Activated B cell treated with CpG ODN at 0.5 μM for 24 hours (primary cell): ENCODE measurements at regions of chr6 and their contacts with region 1.

Region 1: GRCh38 chr6:156825475-156825874 is 48.3 kb downstream of the ARID1B start:
- DNase-seq: no peak
- ATAC-seq: no peak
- H3K4me3 Mint-ChIP-seq: no peak overlapping the region
- H3K27ac Mint-ChIP-seq: peak overlapping the region; percentile 46
- H3K4me1 Mint-ChIP-seq: peaks cover 87% of the 10 kb centered on the region
- H3K27me3 Mint-ChIP-seq: no peaks in the 10 kb centered on the region
- CTCF ChIP-seq: no peak

Region 2: GRCh38 chr6:156589281-156589680 is 236.2 kb before region 1 on chr6:
- CTCF ChIA-PET with region 1: no interaction called
- POLR2A ChIA-PET with region 1: no interaction called
- intact Hi-C with region 1: no loop called
- DNase-seq: no peak
- ATAC-seq: no peak
- H3K4me3 Mint-ChIP-seq: no peak overlapping the region
- H3K27ac Mint-ChIP-seq: no peak overlapping the region
- H3K4me1 Mint-ChIP-seq: no peaks in the 10 kb centered on the region
- H3K27me3 Mint-ChIP-seq: peaks cover 6% of the 10 kb centered on the region
- CTCF ChIP-seq: no peak

Region 3: GRCh38 chr6:156809034-156809433 is 16.4 kb before region 1 on chr6:
- CTCF ChIA-PET with region 1: no interaction called
- POLR2A ChIA-PET with region 1: interaction called, 4 read pairs
- intact Hi-C with region 1: loop called (anchors 2 kb)
- DNase-seq: no peak
- ATAC-seq: peak; percentile 91
- H3K4me3 Mint-ChIP-seq: peak overlapping the region; percentile 44
- H3K27ac Mint-ChIP-seq: peak overlapping the region; percentile 47
- H3K4me1 Mint-ChIP-seq: peaks cover 88% of the 10 kb centered on the region
- H3K27me3 Mint-ChIP-seq: no peaks in the 10 kb centered on the region
- CTCF ChIP-seq: no peak

Region 4: GRCh38 chr6:156839591-156840001 is 14.1 kb after region 1 on chr6:
- CTCF ChIA-PET with region 1: no interaction called
- POLR2A ChIA-PET with region 1: no interaction called
- intact Hi-C with region 1: loop called (anchors 2 kb)
- DNase-seq: no peak
- ATAC-seq: no peak
- H3K4me3 Mint-ChIP-seq: no peak overlapping the region
- H3K27ac Mint-ChIP-seq: peak overlapping the region; percentile 50
- H3K4me1 Mint-ChIP-seq: peaks cover 58% of the 10 kb centered on the region
- H3K27me3 Mint-ChIP-seq: no peaks in the 10 kb centered on the region
- CTCF ChIP-seq: no peak